SK-N-SH (cell line): ENCODE measurements at regions of chr15 and their contacts with region 1.

Region 1: GRCh38 chr15:71800835-71801745 is 9.3 kb upstream of the NR2E3 start:
- DNase-seq: peak; percentile 72
- H3K4me3 ChIP-seq: no peak overlapping the region; a peak in 1 of 4 replicates
- H3K27ac ChIP-seq: no peak overlapping the region
- H3K4me1 ChIP-seq: peaks cover under 1 to 6% of the 10 kb centered on the region in 2 experiments; a peak in 2 of 4 replicates
- H3K27me3 ChIP-seq: no peaks in the 10 kb centered on the region
- CTCF ChIP-seq: peak; percentile 88
- EP300 ChIP-seq: no peak
- RAD21 ChIP-seq: peak; percentile 95

Region 2: DNA sequence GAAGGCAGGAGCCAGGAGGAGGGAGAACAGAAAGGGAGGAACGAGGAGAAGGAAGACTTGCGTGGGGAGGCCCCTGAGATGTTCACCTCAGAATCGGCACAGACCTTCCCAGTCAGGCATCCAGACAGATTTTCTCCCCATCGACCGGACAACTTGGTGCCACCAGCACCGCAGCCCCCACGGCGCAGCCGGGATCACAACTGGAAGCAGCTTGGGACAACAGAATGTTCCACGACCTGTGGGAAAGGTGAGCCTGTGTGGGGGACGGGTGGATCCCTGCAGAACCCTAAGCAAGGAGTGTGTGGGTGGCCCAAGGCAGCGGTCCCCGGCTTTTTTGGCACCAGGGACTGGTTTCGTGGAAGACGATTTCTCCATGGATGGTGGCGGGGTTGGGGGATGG is 63.3 kb before region 1 on chr15:
- CTCF ChIA-PET with region 1: interaction called, 57 read pairs
- POLR2A ChIA-PET with region 1: no interaction called
- DNase-seq: no peak
- H3K4me3 ChIP-seq: no peak overlapping the region
- H3K27ac ChIP-seq: no peak overlapping the region
- H3K4me1 ChIP-seq: no peaks in the 10 kb centered on the region; a peak in 1 of 4 replicates
- H3K27me3 ChIP-seq: no peaks in the 10 kb centered on the region
- CTCF ChIP-seq: no peak
- EP300 ChIP-seq: no peak
- RAD21 ChIP-seq: no peak

Region 3: GRCh38 chr15:71752604-71753289 is 48.3 kb before region 1 on chr15:
- CTCF ChIA-PET with region 1: interaction called, 30 read pairs
- POLR2A ChIA-PET with region 1: no interaction called
- DNase-seq: peak; percentile 55
- H3K4me3 ChIP-seq: no peak overlapping the region
- H3K27ac ChIP-seq: peak overlapping the region; percentile 3 to 68; a peak in 3 of 4 replicates
- H3K4me1 ChIP-seq: peaks cover 0 to 25% of the 10 kb centered on the region in 2 experiments; a peak in 2 of 4 replicates
- H3K27me3 ChIP-seq: no peaks in the 10 kb centered on the region
- CTCF ChIP-seq: peak; percentile 75
- EP300 ChIP-seq: peak in 1 of 2 experiments; percentile 85; a peak in 1 of 4 replicates
- RAD21 ChIP-seq: peak; percentile 59

Region 4: GRCh38 chr15:71780115-71780976 is 20.7 kb before region 1 on chr15:
- CTCF ChIA-PET with region 1: interaction called, 39 read pairs
- POLR2A ChIA-PET with region 1: no interaction called
- DNase-seq: peak; percentile 77
- H3K4me3 ChIP-seq: peak overlapping the region in 1 of 2 experiments; percentile 3; a peak in 1 of 4 replicates
- H3K27ac ChIP-seq: no peak overlapping the region
- H3K4me1 ChIP-seq: peaks cover 0 to 5% of the 10 kb centered on the region in 2 experiments; a peak in 1 of 4 replicates
- H3K27me3 ChIP-seq: no peaks in the 10 kb centered on the region
- CTCF ChIP-seq: peak; percentile 86
- EP300 ChIP-seq: no peak
- RAD21 ChIP-seq: peak; percentile 64

Region 5: DNA sequence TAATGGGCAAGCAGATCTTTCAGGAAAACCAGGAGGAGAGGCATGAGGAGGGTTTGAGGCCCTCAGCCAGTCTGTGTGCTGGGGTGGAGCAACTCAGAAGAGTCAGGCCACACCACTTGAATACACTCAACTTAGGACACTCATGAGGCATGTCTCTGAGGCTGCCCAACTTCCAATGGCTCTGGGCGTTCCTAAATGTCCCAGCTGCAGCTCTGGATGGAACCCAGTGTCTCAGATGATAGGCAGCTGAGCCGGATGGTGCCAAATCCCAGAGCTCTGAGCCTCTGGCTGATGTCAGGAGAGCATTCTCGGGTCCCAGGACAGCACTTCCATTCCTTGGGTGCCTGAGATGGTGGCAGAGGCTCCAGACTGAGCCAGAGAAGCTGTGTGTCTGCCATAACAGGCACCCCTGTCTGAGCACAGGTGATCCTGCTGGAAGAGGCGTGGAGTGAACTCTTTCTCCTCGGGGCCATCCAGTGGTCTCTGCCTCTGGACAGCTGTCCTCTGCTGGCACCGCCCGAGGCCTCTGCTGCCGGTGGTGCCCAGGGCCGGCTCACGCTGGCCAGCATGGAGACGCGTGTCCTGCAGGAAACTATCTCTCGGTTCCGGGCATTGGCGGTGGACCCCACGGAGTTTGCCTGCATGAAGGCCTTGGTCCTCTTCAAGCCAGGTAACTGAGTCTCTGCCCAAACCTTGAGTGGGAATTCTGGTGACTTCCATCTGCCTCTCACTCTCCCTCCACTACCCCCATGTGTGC is 12.1 kb after region 1 on chr15:
- CTCF ChIA-PET with region 1: interaction called, 13 read pairs
- POLR2A ChIA-PET with region 1: no interaction called
- DNase-seq: no peak
- H3K4me3 ChIP-seq: no peak overlapping the region
- H3K27ac ChIP-seq: no peak overlapping the region
- H3K4me1 ChIP-seq: peaks cover 0 to 1% of the 10 kb centered on the region in 2 experiments; a peak in 1 of 4 replicates
- H3K27me3 ChIP-seq: no peaks in the 10 kb centered on the region
- CTCF ChIP-seq: no peak
- EP300 ChIP-seq: no peak
- RAD21 ChIP-seq: no peak

Region 6: DNA sequence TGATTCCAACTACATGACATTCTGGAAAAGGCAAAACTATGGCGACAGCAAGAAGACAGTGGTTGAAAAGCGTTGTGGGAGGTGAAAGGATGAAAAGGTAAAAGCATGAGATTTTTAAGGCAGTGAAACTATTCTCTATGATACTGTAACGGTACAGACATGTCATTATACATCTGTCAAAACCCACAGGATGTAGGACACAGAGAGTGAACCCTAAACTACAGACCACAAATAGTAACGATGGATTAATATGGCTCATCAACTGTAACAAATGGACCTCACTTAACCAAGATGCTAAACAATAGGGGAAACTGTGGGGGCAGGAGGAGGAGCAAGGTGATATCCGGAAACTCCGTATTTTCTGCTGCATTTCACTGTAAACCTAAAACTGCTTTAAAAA is 277.8 kb after region 1 on chr15:
- CTCF ChIA-PET with region 1: no interaction called
- POLR2A ChIA-PET with region 1: no interaction called
- DNase-seq: no peak
- H3K4me3 ChIP-seq: no peak overlapping the region
- H3K27ac ChIP-seq: no peak overlapping the region
- H3K4me1 ChIP-seq: no peaks in the 10 kb centered on the region
- H3K27me3 ChIP-seq: no peaks in the 10 kb centered on the region
- CTCF ChIP-seq: no peak
- EP300 ChIP-seq: no peak
- RAD21 ChIP-seq: no peak

Region 7: DNA sequence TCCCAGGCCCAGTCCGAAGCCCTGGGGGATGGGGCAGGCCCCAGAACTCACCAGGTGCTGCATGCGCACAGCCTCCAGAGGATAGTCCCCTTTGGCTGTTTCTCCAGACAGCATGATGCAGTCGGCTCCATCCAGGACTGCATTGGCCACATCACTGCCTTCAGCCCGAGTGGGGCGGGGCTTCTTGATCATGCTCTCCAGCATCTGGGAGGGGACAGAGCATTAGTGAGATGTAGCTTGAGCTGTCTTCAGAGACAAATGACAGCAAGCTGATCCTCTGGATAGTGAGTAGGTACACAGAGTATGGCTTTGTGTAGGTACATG is 405.5 kb after region 1 on chr15:
- CTCF ChIA-PET with region 1: no interaction called
- POLR2A ChIA-PET with region 1: no interaction called
- DNase-seq: no peak
- H3K4me3 ChIP-seq: no peak overlapping the region
- H3K27ac ChIP-seq: no peak overlapping the region
- H3K4me1 ChIP-seq: peaks cover 30 to 35% of the 10 kb centered on the region in 2 experiments
- H3K27me3 ChIP-seq: no peaks in the 10 kb centered on the region
- CTCF ChIP-seq: no peak
- EP300 ChIP-seq: no peak
- RAD21 ChIP-seq: no peak